ENCODE measurements at regions of chr1 and their contacts with region 1.

Region 1: GRCh38 chr1:42576935-42577334 is 81.3 kb upstream of the PPIH start:
- DNase-seq: no peak
- ATAC-seq: no peak
- H3K4me3 Mint-ChIP-seq: no peak overlapping the region
- H3K27ac Mint-ChIP-seq: no peak overlapping the region
- H3K4me1 Mint-ChIP-seq: no peaks in the 10 kb centered on the region
- H3K27me3 Mint-ChIP-seq: peaks cover 2% of the 10 kb centered on the region

Region 2: GRCh38 chr1:42462828-42463763 is 113.8 kb before region 1 on chr1 and contains the start of gene CCDC30:
- CTCF ChIA-PET with region 1: no interaction called
- POLR2A ChIA-PET with region 1: no interaction called
- DNase-seq: peak; percentile 98
- ATAC-seq: peak; percentile 98
- H3K4me3 Mint-ChIP-seq: peak within 1 kb of the TSS; percentile 81
- H3K27ac Mint-ChIP-seq: peak within 1 kb of the TSS; percentile 81
- H3K4me1 Mint-ChIP-seq: peaks cover 34% of the 10 kb centered on the region
- H3K27me3 Mint-ChIP-seq: peaks cover 9% of the 10 kb centered on the region
- total RNA-seq, gene CCDC30: 1.7 to 2.2 TPM

Region 3: GRCh38 chr1:42551180-42551579 is 25.8 kb before region 1 on chr1:
- CTCF ChIA-PET with region 1: no interaction called
- POLR2A ChIA-PET with region 1: no interaction called
- DNase-seq: no peak
- ATAC-seq: no peak
- H3K4me3 Mint-ChIP-seq: no peak overlapping the region
- H3K27ac Mint-ChIP-seq: no peak overlapping the region
- H3K4me1 Mint-ChIP-seq: no peaks in the 10 kb centered on the region
- H3K27me3 Mint-ChIP-seq: peaks cover 3% of the 10 kb centered on the region

Region 4: DNA sequence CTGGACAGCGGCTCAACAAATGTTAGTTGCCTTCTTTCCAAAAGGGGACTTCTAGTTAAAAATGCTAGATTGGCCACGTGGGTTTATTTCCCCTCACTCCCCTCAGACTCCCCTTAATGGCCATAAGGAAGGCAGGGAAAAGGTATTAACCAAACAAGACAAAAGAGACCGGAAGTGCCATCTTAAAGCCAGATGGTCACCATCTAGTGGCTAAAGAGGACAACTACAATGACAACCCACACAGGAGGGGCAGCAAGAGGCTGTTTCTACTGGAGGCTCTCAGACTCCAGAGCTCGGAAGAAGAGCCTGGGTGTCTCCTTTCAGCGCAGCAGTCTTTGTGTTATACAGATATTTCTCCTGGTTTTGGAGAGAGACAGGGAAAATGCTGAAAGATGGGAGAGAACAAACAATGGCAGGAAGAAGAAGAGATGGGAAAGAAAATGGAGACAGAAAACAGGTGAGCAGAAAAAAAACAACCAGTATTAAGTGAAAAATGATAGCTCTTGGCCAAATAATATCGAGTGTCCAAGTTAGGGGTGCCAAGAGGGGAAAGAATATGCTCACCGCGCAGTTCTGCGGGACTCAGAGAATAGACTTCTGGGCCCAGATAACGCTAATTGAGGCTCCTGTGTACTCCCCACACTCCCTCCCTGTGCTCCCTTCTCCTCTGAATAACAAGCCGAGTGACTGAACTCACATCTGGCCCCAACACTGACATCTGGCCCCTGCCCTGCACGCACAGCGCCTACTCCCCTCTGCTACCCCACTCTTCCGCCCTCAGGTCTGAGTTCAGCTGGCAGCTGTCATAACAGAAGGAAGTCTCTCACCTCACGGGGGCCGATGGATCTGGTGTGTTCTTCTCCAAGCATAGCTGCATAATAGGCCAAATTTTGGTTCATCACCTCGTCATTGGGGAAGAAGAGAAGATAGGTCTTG is 180.3 kb after region 1 on chr1:
- CTCF ChIA-PET with region 1: interaction called, 12 read pairs
- POLR2A ChIA-PET with region 1: no interaction called
- DNase-seq: peak; percentile 31
- ATAC-seq: no peak
- H3K4me3 Mint-ChIP-seq: no peak overlapping the region
- H3K27ac Mint-ChIP-seq: no peak overlapping the region
- H3K4me1 Mint-ChIP-seq: peaks cover under 1% of the 10 kb centered on the region
- H3K27me3 Mint-ChIP-seq: no peaks in the 10 kb centered on the region